ENCODE measurements at regions of chr6 and their contacts with region 1.

Region 1: GRCh38 chr6:131627724-131628682 is at the start of gene MED23:
- DNase-seq: peak; percentile 88 to 95 (median 91)
- H3K4me3 ChIP-seq: peak within 1 kb of the TSS; percentile 48 to 93
- H3K4me3 Mint-ChIP-seq: peak within 1 kb of the TSS; percentile 96 to 99 (median 98)
- H3K27ac ChIP-seq: peak within 1 kb of the TSS; percentile 70
- H3K27ac Mint-ChIP-seq: peak within 1 kb of the TSS; percentile 88 to 97 (median 93)
- H3K4me1 ChIP-seq: peaks cover 26% of the 10 kb centered on the region
- H3K4me1 Mint-ChIP-seq: peaks cover 19 to 37% (median 32%) of the 10 kb centered on the region in 4 donors
- H3K27me3 ChIP-seq: no peaks in the 10 kb centered on the region
- H3K27me3 Mint-ChIP-seq: no peaks in the 10 kb centered on the region
- total RNA-seq, gene MED23: 53.7 to 56.4 TPM

Region 2: DNA sequence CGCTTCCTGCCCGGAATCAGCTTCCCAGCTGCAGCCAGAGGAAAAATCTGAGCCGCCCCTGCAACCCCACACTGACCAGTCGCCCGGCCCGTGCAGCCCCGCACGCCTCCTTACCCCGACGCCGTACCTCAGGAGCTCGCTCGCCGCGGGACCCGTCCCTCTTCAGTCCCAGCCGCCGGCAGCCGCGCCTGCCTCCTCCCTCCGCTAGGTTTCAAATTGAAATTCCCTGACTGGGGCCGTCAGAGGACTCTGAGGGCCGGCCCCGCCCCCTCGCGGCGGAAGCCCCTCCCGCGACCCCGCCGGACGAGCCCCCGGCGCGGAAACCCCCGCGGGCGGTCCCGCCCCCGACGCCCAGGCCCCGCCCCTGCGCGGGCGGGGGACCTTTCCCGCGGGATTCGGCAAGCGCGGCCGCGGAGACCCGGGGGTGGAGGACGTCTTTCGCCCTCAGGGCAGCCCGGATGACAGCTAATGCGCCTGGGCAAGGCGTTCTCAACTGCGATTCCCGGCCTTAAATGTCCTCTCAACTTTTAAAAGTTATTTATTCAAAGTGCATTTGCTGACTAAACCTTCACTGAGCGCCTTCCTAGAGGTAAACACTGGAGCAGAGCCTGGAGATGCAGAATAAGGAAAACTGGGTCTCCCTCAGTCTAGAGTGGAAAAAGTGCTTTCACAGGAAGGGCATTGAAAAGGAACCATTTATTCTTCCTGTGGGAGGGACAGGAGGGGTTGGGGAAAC is 564.8 kb before region 1 on chr6 and contains the start of gene EPB41L2:
- CTCF ChIA-PET with region 1: no interaction called
- POLR2A ChIA-PET with region 1: interaction called, 7 read pairs
- intact Hi-C with region 1: loop called (anchors 2 kb)
- DNase-seq: peak; percentile 76 to 81 (median 78)
- H3K4me3 ChIP-seq: peak within 1 kb of the TSS; percentile 54 to 59
- H3K4me3 Mint-ChIP-seq: peak within 1 kb of the TSS; percentile 82 to 88 (median 86)
- H3K27ac ChIP-seq: peak within 1 kb of the TSS; percentile 38
- H3K27ac Mint-ChIP-seq: peak within 1 kb of the TSS; percentile 12 to 92 (median 81)
- H3K4me1 ChIP-seq: peaks cover 15% of the 10 kb centered on the region
- H3K4me1 Mint-ChIP-seq: peaks cover 18 to 36% (median 25%) of the 10 kb centered on the region in 4 donors
- H3K27me3 ChIP-seq: no peaks in the 10 kb centered on the region
- H3K27me3 Mint-ChIP-seq: no peaks in the 10 kb centered on the region
- total RNA-seq, gene EPB41L2: 18.4 to 24.3 TPM

Region 3: DNA sequence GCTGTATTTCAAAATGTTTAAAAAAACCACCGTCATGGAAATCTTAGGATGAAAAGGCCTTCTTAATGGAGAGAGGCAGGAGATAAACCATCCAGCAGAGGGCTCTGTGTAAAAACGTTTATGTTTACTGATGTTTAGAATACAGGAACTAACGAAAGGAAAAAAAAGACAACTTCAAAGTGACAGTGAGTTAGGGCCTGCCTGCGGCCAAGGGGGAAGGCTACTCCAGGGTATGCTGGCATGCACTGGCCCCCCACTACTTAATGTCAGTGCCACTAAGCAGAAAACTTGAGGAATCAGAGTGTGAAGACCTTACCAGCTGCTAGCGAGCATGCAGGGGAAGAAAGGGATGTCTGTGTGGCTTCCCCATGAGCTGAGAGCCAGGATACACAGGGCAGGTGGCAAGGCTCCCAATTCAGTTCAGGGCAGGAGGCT is 445.0 kb before region 1 on chr6:
- CTCF ChIA-PET with region 1: interaction called, 36 read pairs
- POLR2A ChIA-PET with region 1: interaction called, 5 read pairs
- intact Hi-C with region 1: loop called (anchors 1 kb)
- DNase-seq: peak; percentile 43 to 57 (median 53)
- H3K4me3 ChIP-seq: peak overlapping the region in 1 of 2 donors; percentile 36
- H3K4me3 Mint-ChIP-seq: peak overlapping the region in 7 of 8 donors; percentile 52 to 90 (median 69)
- H3K27ac ChIP-seq: no peak overlapping the region
- H3K27ac Mint-ChIP-seq: peak overlapping the region; percentile 25 to 96 (median 88)
- H3K4me1 ChIP-seq: peaks cover 10% of the 10 kb centered on the region
- H3K4me1 Mint-ChIP-seq: peaks cover 6 to 18% (median 11%) of the 10 kb centered on the region in 4 donors
- H3K27me3 ChIP-seq: no peaks in the 10 kb centered on the region
- H3K27me3 Mint-ChIP-seq: no peaks in the 10 kb centered on the region

Region 4: DNA sequence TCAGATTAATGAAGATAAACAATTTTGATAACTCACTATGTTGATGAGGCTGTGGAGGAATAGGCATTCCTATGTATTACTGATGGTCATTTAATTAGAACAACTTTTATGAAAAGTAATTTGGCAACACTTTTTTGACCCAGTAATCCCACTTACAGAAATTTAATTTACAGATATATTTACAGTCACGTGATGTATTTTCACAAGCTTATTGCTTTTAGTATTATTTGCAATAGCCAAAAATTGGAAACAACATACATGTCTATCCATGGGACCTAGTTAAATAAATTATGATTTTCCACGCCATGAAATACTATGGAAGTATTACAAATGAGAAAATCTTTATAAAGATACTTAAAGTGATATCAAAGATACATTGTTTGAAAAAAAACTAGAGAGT is 147.7 kb before region 1 on chr6:
- CTCF ChIA-PET with region 1: no interaction called
- POLR2A ChIA-PET with region 1: no interaction called
- intact Hi-C with region 1: no loop called
- DNase-seq: no peak
- H3K4me3 ChIP-seq: no peak overlapping the region
- H3K4me3 Mint-ChIP-seq: no peak overlapping the region
- H3K27ac ChIP-seq: no peak overlapping the region
- H3K27ac Mint-ChIP-seq: no peak overlapping the region
- H3K4me1 ChIP-seq: no peaks in the 10 kb centered on the region
- H3K4me1 Mint-ChIP-seq: peaks cover 0 to 1% (median 0%) of the 10 kb centered on the region in 4 donors
- H3K27me3 ChIP-seq: no peaks in the 10 kb centered on the region
- H3K27me3 Mint-ChIP-seq: no peaks in the 10 kb centered on the region

Region 5: DNA sequence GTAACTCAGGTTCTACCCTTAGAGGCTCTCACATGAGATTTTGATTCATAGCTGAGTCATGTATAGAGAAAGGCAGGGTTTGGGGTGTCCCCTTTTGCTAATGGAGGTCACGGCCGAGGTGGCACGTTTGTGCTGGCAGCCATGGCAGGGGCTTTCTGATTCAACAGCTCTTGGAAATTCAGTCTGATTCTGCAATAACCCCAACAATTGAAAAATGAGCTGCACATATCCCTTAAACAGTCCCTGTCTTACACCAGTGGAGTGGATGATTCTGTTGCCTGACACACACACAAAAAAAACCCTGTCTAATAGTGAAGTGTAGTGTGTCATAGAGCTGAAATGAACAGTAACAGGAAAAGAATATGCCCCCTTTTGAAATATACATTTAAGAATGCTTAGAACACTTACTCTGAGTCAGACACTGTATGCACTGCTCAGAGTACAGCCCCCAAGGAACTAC is 95.4 kb before region 1 on chr6:
- CTCF ChIA-PET with region 1: interaction called, 27 read pairs
- POLR2A ChIA-PET with region 1: interaction called, 5 read pairs
- intact Hi-C with region 1: loop called (anchors 1 kb)
- DNase-seq: no peak
- H3K4me3 ChIP-seq: no peak overlapping the region
- H3K4me3 Mint-ChIP-seq: peak overlapping the region in 4 of 8 donors; percentile 2 to 52 (median 39)
- H3K27ac ChIP-seq: no peak overlapping the region
- H3K27ac Mint-ChIP-seq: peak overlapping the region in 5 of 7 donors; percentile 7 to 74 (median 55)
- H3K4me1 ChIP-seq: peaks cover 19% of the 10 kb centered on the region
- H3K4me1 Mint-ChIP-seq: peaks cover 31 to 55% (median 44%) of the 10 kb centered on the region in 4 donors
- H3K27me3 ChIP-seq: no peaks in the 10 kb centered on the region
- H3K27me3 Mint-ChIP-seq: peaks cover 0 to 5% of the 10 kb centered on the region in 2 donors

Region 6: DNA sequence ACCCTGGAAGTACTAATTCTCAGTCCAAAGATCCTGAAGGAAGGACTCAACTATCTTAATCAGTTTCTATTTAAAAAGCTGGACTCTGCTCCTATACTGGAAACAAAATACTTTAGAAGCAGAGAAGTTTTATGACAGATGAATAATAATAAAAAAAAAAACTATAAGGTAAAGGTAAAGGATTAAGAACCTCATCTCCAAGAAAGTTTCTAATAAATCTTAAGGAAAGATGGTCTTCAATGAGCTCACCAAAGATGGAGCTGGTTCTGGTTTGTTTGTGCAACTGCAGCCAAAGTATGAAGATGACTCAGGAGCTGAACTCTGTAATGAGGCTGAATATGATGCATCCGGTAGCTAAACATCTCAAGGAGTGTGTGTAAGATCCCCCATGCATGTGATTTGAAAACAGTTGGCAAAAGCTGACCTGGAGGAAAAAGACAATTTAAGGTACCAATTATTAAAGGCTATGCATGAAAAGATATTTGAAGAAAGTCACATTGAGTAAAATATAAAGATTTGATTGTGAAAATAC is 25.2 kb before region 1 on chr6:
- CTCF ChIA-PET with region 1: interaction called, 18 read pairs
- POLR2A ChIA-PET with region 1: interaction called, 4 read pairs
- intact Hi-C with region 1: no loop called
- DNase-seq: no peak
- H3K4me3 ChIP-seq: no peak overlapping the region
- H3K4me3 Mint-ChIP-seq: peak overlapping the region in 1 of 8 donors; percentile 6
- H3K27ac ChIP-seq: no peak overlapping the region
- H3K27ac Mint-ChIP-seq: no peak overlapping the region
- H3K4me1 ChIP-seq: no peaks in the 10 kb centered on the region
- H3K4me1 Mint-ChIP-seq: peaks cover 0 to 2% (median 0%) of the 10 kb centered on the region in 4 donors
- H3K27me3 ChIP-seq: no peaks in the 10 kb centered on the region
- H3K27me3 Mint-ChIP-seq: no peaks in the 10 kb centered on the region

Region 7: DNA sequence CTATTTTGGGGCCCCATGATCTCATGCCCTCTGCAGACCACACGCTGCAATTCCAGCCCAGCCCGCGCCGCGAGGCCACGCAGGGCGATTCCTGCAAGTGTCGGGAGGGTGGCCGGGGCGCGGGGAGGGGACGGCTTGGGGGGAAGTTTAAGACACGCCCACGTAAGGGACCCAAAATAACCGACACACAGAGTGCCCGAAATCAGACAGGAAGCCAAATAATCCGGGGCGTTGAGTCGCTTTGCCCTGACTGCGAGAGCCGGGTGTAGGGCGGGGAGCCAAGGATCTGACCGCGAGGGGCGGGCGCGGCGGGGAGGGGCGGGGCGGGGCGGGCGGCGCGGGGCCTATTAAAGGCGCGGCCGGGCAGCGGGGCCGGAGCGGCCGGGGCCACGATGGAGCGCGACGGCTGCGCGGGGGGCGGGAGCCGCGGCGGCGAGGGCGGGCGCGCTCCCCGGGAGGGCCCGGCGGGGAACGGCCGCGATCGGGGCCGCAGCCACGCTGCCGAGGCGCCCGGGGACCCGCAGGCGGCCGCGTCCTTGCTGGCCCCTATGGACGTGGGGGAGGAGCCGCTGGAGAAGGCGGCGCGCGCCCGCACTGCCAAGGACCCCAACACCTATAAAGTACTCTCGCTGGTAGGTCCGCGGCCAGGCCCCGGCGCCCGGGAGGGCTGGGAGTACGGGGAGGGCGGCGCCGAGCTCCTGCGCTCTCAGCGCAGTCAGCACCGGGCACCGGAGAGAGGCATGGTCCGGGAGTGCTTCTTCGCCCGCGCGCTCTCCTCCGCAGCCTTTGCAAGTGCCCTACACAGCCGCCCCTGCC is 179.8 kb after region 1 on chr6 and contains the start of gene ENPP1:
- CTCF ChIA-PET with region 1: no interaction called
- POLR2A ChIA-PET with region 1: no interaction called
- intact Hi-C with region 1: loop called (anchors 5 kb)
- DNase-seq: peak; percentile 34 to 69 (median 41)
- H3K4me3 ChIP-seq: peak within 1 kb of the TSS; percentile 36 to 60
- H3K4me3 Mint-ChIP-seq: peak within 1 kb of the TSS; percentile 85 to 95 (median 90)
- H3K27ac ChIP-seq: no peak within 1 kb of the TSS
- H3K27ac Mint-ChIP-seq: peak within 1 kb of the TSS in 6 of 7 donors; percentile 24 to 85 (median 58)
- H3K4me1 ChIP-seq: peaks cover 23% of the 10 kb centered on the region
- H3K4me1 Mint-ChIP-seq: peaks cover 16 to 32% (median 25%) of the 10 kb centered on the region in 4 donors
- H3K27me3 ChIP-seq: peaks cover 9% of the 10 kb centered on the region
- H3K27me3 Mint-ChIP-seq: peaks cover 5 to 6% of the 10 kb centered on the region in 2 donors
- total RNA-seq, gene ENPP1: 0.11 to 0.52 TPM

Region 8: GRCh38 chr6:131858765-131859415 is 230.9 kb after region 1 on chr6:
- CTCF ChIA-PET with region 1: no interaction called
- POLR2A ChIA-PET with region 1: no interaction called
- intact Hi-C with region 1: no loop called
- DNase-seq: no peak
- H3K4me3 ChIP-seq: no peak overlapping the region
- H3K4me3 Mint-ChIP-seq: no peak overlapping the region
- H3K27ac ChIP-seq: no peak overlapping the region
- H3K27ac Mint-ChIP-seq: no peak overlapping the region
- H3K4me1 ChIP-seq: no peaks in the 10 kb centered on the region
- H3K4me1 Mint-ChIP-seq: no peaks in the 10 kb centered on the region
- H3K27me3 ChIP-seq: no peaks in the 10 kb centered on the region
- H3K27me3 Mint-ChIP-seq: peaks cover 0 to 4% of the 10 kb centered on the region in 2 donors

Region 9: GRCh38 chr6:132512638-132513632 is 884.9 kb after region 1 on chr6 and contains the start of gene STX7:
- CTCF ChIA-PET with region 1: interaction called, 3 read pairs
- POLR2A ChIA-PET with region 1: no interaction called
- intact Hi-C with region 1: loop called (anchors 5 kb)
- DNase-seq: peak; percentile 85 to 89 (median 87)
- H3K4me3 ChIP-seq: peak within 1 kb of the TSS; percentile 36 to 63
- H3K4me3 Mint-ChIP-seq: peak within 1 kb of the TSS; percentile 98 to 99 (median 98)
- H3K27ac ChIP-seq: peak within 1 kb of the TSS; percentile 54
- H3K27ac Mint-ChIP-seq: peak within 1 kb of the TSS; percentile 47 to 97 (median 92)
- H3K4me1 ChIP-seq: peaks cover 23% of the 10 kb centered on the region
- H3K4me1 Mint-ChIP-seq: peaks cover 23 to 40% (median 30%) of the 10 kb centered on the region in 4 donors
- H3K27me3 ChIP-seq: no peaks in the 10 kb centered on the region
- H3K27me3 Mint-ChIP-seq: no peaks in the 10 kb centered on the region
- total RNA-seq, gene STX7: 22.7 TPM